Activated B cell treated with CpG ODN at 0.5 μM for 24 hours (primary cell): ENCODE measurements at regions of chr1 and their contacts with region 1.

Region 1: GRCh38 chr1:87812871-87813577 is 484.3 kb downstream of the LMO4 start:
- DNase-seq: no peak
- ATAC-seq: peak; percentile 88
- H3K4me3 Mint-ChIP-seq: no peak overlapping the region
- H3K27ac Mint-ChIP-seq: peak overlapping the region; percentile 64
- H3K4me1 Mint-ChIP-seq: peaks cover 23% of the 10 kb centered on the region
- H3K27me3 Mint-ChIP-seq: no peaks in the 10 kb centered on the region
- CTCF ChIP-seq: no peak

Region 2: DNA sequence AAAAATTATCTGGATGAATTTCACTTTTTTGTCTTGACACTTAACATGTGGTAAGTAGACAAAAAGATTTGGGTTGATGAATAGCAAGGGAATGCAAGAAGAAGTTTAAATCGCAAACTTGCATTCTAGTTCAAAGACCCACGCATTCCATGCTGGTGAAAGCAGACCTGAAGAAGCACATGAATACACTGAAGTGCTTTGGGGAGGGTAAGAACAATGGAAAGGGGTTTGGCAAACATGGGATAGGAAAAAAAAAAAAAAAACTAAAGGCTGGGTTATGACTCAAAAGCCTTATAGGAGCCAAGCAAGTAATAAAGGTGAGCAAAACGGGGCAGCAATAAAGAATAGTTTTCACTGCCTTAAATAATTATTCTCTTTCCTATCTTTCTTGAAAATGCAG is 34.1 kb before region 1 on chr1:
- CTCF ChIA-PET with region 1: no interaction called
- POLR2A ChIA-PET with region 1: interaction called, 10 read pairs
- intact Hi-C with region 1: no loop called
- DNase-seq: no peak
- ATAC-seq: no peak
- H3K4me3 Mint-ChIP-seq: no peak overlapping the region
- H3K27ac Mint-ChIP-seq: no peak overlapping the region
- H3K4me1 Mint-ChIP-seq: no peaks in the 10 kb centered on the region
- H3K27me3 Mint-ChIP-seq: no peaks in the 10 kb centered on the region
- CTCF ChIP-seq: no peak

Region 3: DNA sequence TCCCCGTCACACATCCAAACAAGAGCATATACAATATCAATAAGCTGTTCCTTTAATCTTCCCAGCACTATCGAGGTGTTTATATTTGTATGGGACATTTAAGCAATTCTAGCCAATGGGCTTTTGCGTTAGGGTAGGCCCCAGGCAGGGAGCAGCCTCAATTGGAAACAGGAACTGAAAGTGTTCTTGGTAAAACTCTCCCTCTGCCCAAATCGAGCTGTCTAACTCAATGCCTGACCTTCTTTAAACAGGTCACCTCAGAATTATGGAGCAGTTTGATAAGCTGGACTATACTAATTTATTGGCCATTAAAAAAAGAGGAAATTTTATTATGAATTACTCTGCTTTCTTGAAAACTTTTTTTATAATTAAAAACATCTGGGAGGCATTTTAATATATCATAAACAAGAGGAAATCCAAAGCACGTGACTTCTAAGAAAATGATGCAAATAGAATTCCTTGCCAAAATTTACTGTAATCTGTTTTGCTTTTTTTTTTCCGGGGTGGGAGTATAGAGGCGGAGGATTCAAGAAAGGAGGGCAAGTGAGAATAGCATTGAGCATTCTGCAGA is 13.7 kb after region 1 on chr1:
- CTCF ChIA-PET with region 1: interaction called, 3 read pairs
- POLR2A ChIA-PET with region 1: interaction called, 3 read pairs
- intact Hi-C with region 1: loop called (anchors 1 kb)
- DNase-seq: no peak
- ATAC-seq: peak; percentile 95
- H3K4me3 Mint-ChIP-seq: peak overlapping the region; percentile 44
- H3K27ac Mint-ChIP-seq: peak overlapping the region; percentile 65
- H3K4me1 Mint-ChIP-seq: peaks cover 43% of the 10 kb centered on the region
- H3K27me3 Mint-ChIP-seq: no peaks in the 10 kb centered on the region
- CTCF ChIP-seq: no peak

Region 4: GRCh38 chr1:87872189-87872588 is 59.2 kb after region 1 on chr1:
- CTCF ChIA-PET with region 1: interaction called, 4 read pairs
- POLR2A ChIA-PET with region 1: no interaction called
- intact Hi-C with region 1: loop called (anchors 5 kb)
- DNase-seq: no peak
- ATAC-seq: peak; percentile 34
- H3K4me3 Mint-ChIP-seq: peak overlapping the region; percentile 25
- H3K27ac Mint-ChIP-seq: peak overlapping the region; percentile 89
- H3K4me1 Mint-ChIP-seq: peaks cover 48% of the 10 kb centered on the region
- H3K27me3 Mint-ChIP-seq: no peaks in the 10 kb centered on the region
- CTCF ChIP-seq: no peak

Region 5: DNA sequence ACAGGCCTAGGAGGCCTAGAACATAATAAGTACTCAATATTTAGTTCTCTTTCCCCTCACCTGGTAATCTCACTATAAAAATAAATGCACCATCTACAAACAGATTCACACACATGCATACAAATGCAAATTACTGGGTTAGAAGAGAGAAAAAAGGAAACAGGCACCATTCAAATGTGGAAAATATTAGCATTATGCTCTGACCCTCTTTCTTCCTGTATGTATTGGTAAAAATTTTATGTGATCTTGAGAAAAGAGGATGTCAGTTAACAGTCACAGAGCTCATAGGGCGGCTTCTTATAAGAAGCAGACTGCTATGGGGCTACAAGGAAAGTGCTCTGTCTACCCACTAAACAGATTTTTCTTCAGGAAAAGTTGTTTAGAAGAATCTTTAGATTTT is 81.0 kb after region 1 on chr1:
- CTCF ChIA-PET with region 1: no interaction called
- POLR2A ChIA-PET with region 1: no interaction called
- intact Hi-C with region 1: loop called (anchors 5 kb)
- DNase-seq: no peak
- ATAC-seq: peak; percentile 74
- H3K4me3 Mint-ChIP-seq: peak overlapping the region; percentile 13
- H3K27ac Mint-ChIP-seq: peak overlapping the region; percentile 30
- H3K4me1 Mint-ChIP-seq: peaks cover 26% of the 10 kb centered on the region
- H3K27me3 Mint-ChIP-seq: no peaks in the 10 kb centered on the region
- CTCF ChIP-seq: no peak

Region 6: DNA sequence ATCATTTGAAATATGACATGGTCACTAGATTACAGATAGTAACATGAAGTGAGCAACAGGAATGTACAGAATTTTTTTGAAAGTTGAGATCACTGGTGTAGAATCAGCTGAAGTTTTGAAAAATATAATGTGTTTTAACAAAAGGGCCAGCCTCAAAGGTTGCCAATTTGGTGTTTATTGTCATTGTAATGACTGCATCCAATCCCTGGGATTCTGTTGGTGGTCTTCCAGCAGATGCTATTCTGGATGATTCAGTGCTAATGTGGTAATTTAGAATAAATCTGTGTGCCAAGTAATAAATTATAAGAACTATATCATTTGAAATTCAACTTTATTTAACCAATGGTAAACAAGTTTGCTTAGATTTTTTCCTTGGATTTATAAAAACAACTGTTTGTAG is 434.6 kb after region 1 on chr1:
- CTCF ChIA-PET with region 1: no interaction called
- POLR2A ChIA-PET with region 1: no interaction called
- intact Hi-C with region 1: no loop called
- DNase-seq: no peak
- ATAC-seq: no peak
- H3K4me3 Mint-ChIP-seq: no peak overlapping the region
- H3K27ac Mint-ChIP-seq: no peak overlapping the region
- H3K4me1 Mint-ChIP-seq: no peaks in the 10 kb centered on the region
- H3K27me3 Mint-ChIP-seq: no peaks in the 10 kb centered on the region
- CTCF ChIP-seq: no peak